Left lung (tissue), 14 donors: ENCODE measurements at regions of chr9 and their contacts with region 1.

Region 1: GRCh38 chr9:91193658-91194391 is 167.9 kb downstream of the AUH start:
- DNase-seq: peak; percentile 87 to 95 (median 92)
- ATAC-seq: peak; percentile 69
- H3K4me3 ChIP-seq: peak overlapping the region; percentile 27 to 35
- H3K27ac ChIP-seq: peak overlapping the region; percentile 94 to 99
- H3K4me1 ChIP-seq: peaks cover 34 to 77% of the 10 kb centered on the region in 2 donors
- H3K27me3 ChIP-seq: no peaks in the 10 kb centered on the region
- CTCF ChIP-seq: no peak

Region 2: GRCh38 chr9:91060503-91061343 is 133.1 kb before region 1 on chr9:
- intact Hi-C with region 1: loop called in 1 of 2 experiments (anchors 5 kb)
- DNase-seq: peak in 2 of 4 donors; percentile 86 to 90
- ATAC-seq: peak; percentile 78
- H3K4me3 ChIP-seq: no peak overlapping the region
- H3K27ac ChIP-seq: peak overlapping the region; percentile 71 to 82
- H3K4me1 ChIP-seq: peaks cover 8 to 42% of the 10 kb centered on the region in 2 donors
- H3K27me3 ChIP-seq: no peaks in the 10 kb centered on the region
- CTCF ChIP-seq: no peak

Region 3: DNA sequence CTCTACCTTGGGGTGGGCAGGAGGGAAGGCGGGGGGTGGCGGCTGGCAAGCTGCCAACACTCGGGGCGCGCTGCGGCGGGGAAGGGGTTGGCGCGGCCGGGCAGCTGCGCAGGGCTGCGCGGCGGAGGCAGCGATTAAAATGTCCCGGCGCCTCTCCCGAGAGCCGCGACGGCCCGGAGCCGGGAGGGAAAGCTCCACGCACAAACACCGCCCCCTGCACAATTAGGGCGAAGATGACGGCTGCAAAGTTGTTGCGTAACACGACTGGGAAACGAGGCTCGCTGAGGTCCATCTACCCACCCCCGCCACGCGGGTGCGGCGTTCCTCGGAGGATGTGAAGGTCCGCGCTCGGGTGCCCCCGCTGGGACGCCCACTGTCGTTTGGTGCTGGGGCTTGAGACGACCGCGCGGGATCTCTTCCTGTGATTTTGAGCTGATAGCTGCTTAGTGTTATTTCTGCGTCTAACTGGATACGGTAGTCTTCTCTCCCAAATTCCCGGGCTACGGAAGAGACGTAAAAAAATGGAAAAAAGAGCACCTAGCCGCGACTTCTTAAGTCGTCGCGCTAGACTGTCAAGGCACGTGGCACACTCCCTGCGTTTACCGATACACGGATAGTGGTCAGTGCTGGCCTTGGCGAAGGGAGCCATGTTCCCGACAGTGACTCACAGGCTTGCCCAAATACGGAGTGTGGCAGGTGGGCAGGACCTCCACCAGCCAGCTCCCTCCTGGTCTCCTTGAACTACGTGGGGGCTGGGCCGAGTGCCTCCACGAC is 230.8 kb after region 1 on chr9:
- intact Hi-C with region 1: loop called in 1 of 2 experiments (anchors 5 kb)
- DNase-seq: peak; percentile 87 to 95 (median 92)
- ATAC-seq: peak; percentile 66
- H3K4me3 ChIP-seq: peak overlapping the region; percentile 62 to 72
- H3K27ac ChIP-seq: peak overlapping the region; percentile 98 to 99
- H3K4me1 ChIP-seq: peaks cover 18 to 75% of the 10 kb centered on the region in 2 donors
- H3K27me3 ChIP-seq: no peaks in the 10 kb centered on the region
- CTCF ChIP-seq: no peak